ENCODE measurements at regions of chr4 and their contacts with region 1.

Region 1: GRCh38 chr4:10180927-10181782 is 64.6 kb upstream of the WDR1 start:
- DNase-seq: peak in 1 of 5 donors; percentile 32
- ATAC-seq: peak in 3 of 4 donors; percentile 31 to 72 (median 67)
- H3K4me3 ChIP-seq: no peak overlapping the region
- H3K27ac ChIP-seq: peak overlapping the region in 2 of 12 donors; percentile 21 to 32
- H3K4me1 ChIP-seq: peaks cover 0 to 28% (median 1%) of the 10 kb centered on the region in 12 donors
- H3K27me3 ChIP-seq: no peaks in the 10 kb centered on the region
- CTCF ChIP-seq: no peak
- POLR2A ChIP-seq: no peak

Region 2: DNA sequence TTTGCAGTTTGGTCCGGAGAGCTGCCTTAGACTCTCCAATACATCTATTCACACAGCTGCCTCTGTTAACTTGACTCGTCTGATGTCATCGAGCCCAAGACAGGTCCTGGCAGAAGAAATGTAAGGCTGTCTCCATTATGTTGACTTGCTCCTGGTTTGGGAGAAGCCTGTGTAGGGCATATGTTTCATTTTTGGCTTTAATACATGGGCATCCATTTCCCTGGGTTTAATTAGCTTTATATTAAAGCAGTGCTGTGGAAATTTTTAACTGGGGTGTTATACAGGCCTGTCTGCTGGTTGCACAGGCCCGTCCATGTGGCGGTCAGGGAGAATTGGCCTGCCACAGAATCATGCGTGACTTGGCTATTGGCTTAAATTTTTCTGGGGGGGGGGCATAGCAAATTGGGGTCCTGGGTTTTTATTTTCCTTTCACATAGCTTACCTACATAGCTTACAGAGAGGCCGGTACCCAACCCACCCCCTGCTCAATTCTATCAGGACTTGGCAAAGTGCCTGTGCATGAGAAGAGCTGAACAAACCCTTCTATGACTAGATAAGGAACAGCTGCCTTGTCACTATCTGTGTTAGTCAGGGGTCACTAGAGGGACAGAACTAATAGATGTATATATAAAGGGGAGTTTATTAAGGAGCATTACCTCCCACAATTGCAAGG is 59.0 kb after region 1 on chr4:
- intact Hi-C with region 1: loop called in 1 of 10 experiments (anchors 10 kb)
- DNase-seq: no peak
- ATAC-seq: peak in 1 of 4 donors; percentile 56
- H3K4me3 ChIP-seq: no peak overlapping the region
- H3K27ac ChIP-seq: no peak overlapping the region
- H3K4me1 ChIP-seq: no peaks in the 10 kb centered on the region
- H3K27me3 ChIP-seq: no peaks in the 10 kb centered on the region
- CTCF ChIP-seq: no peak
- POLR2A ChIP-seq: no peak

Measured in heart left ventricle (tissue), 16 donors.